Right cardiac atrium (tissue), 5 donors: ENCODE measurements at regions of chr2 and their contacts with region 1.

Region 1: DNA sequence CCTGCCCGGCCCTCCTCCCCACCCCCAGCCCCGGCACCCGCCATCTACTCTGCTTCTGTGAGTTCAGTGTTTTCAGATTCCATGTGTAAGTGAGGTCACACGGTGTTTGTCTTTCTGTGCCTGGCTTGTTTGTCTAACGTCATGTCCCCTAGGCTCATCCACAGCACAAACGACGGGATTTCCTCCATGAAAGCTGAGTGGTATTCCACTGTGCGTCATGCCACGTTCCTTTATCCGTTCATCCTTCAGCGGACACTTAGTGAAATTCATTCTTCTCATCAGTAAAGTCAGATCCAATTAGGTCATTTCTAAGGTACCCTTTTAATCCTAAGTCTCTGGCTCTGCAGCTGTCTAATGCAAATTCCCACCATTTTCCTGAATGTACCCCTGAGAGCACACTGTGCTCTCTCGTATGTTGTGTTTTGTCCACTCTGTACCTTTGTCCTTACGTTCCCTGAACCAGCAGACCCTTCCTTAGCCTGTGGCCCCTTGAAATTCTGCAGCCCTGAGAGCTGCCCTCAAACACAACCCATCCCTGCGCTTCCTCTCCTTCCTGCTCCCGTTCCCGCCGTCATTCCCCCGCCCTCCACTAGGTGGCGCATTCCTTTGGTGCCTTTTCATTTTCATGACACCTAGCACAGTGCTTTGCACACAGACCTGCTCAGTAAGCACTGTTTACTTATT is 44.1 kb downstream of the TRAPPC12 start:
- DNase-seq: peak; percentile 57 to 87 (median 85)
- ATAC-seq: peak in 1 of 2 donors; percentile 62
- H3K4me3 ChIP-seq: no peak overlapping the region
- H3K27ac ChIP-seq: no peak overlapping the region
- H3K4me1 ChIP-seq: peaks cover 1% of the 10 kb centered on the region
- H3K27me3 ChIP-seq: no peaks in the 10 kb centered on the region

Region 2: GRCh38 chr2:3461801-3462492 is 38.3 kb after region 1 on chr2:
- intact Hi-C with region 1: loop called in 1 of 4 experiments (anchors 5 kb)
- DNase-seq: peak in 2 of 3 donors; percentile 51 to 61
- ATAC-seq: no peak
- H3K4me3 ChIP-seq: no peak overlapping the region
- H3K27ac ChIP-seq: no peak overlapping the region
- H3K4me1 ChIP-seq: peaks cover 3% of the 10 kb centered on the region
- H3K27me3 ChIP-seq: no peaks in the 10 kb centered on the region

Region 3: GRCh38 chr2:3651691-3652648 is 228.3 kb after region 1 on chr2:
- intact Hi-C with region 1: loop called in 1 of 4 experiments (anchors 10 kb)
- DNase-seq: peak; percentile 55 to 80 (median 77)
- ATAC-seq: peak; percentile 60 to 63
- H3K4me3 ChIP-seq: peak overlapping the region; percentile 3
- H3K27ac ChIP-seq: peak overlapping the region; percentile 38
- H3K4me1 ChIP-seq: no peaks in the 10 kb centered on the region
- H3K27me3 ChIP-seq: no peaks in the 10 kb centered on the region